PC-3 (cell line): ENCODE measurements at regions of chr5 and their contacts with region 1.

Region 1: GRCh38 chr5:57779383-57780223 is 297.0 kb upstream of the ACTBL2 start:
- DNase-seq: peak; percentile 83
- ATAC-seq: peak; percentile 44
- H3K4me3 ChIP-seq: no peak overlapping the region
- H3K27ac ChIP-seq: peak overlapping the region; percentile 40
- H3K4me1 ChIP-seq: peaks cover 47% of the 10 kb centered on the region
- H3K27me3 ChIP-seq: no peaks in the 10 kb centered on the region
- CTCF ChIP-seq: peak; percentile 71

Region 2: GRCh38 chr5:57499262-57500050 is 280.1 kb before region 1 on chr5:
- CTCF ChIA-PET with region 1: interaction called, 3 read pairs
- POLR2A ChIA-PET with region 1: no interaction called
- intact Hi-C with region 1: loop called (anchors 1 kb)
- DNase-seq: peak; percentile 71
- ATAC-seq: peak; percentile 41; the same call in 1 of the 2 replicates
- H3K4me3 ChIP-seq: peak overlapping the region; percentile 19; the same call in 1 of the 2 replicates
- H3K27ac ChIP-seq: no peak overlapping the region
- H3K4me1 ChIP-seq: peaks cover 35% of the 10 kb centered on the region
- H3K27me3 ChIP-seq: no peaks in the 10 kb centered on the region
- CTCF ChIP-seq: peak; percentile 77

Region 3: DNA sequence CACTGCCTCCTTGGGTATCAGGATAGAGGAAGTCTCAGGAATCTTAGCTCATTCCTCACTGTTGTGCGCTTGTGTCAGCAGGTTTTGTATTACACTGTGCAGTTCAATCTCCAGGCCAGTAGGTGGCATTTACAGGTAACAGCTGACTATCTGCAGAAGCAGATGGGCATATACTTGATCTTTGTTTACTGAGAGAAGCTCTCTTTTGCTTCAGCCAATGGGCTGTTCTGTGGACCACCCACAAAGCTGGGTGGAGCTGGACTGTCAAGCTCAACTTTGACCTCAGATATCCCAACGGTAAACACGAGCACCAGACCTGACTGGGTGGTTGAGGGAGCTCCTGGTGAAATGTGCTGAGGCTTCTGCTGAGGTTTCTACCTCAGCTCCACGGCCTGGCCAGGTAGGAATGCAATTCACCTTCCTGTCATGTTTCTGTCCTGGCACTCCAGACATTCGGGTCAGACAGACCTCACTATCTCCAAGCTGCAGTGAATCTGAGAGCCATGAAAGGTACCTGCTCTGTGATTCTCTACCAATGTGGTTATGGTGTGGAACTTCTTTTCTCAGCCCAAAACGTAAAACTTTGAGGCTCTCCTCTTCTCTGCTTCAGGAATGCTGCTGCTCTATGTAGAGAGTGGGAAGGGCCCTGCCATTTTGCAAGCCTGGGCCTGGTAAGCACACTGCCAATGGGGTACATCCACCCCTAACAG is 129.1 kb before region 1 on chr5:
- CTCF ChIA-PET with region 1: interaction called, 14 read pairs
- POLR2A ChIA-PET with region 1: no interaction called
- intact Hi-C with region 1: loop called (anchors 1 kb)
- DNase-seq: peak; percentile 64
- ATAC-seq: peak; percentile 86
- H3K4me3 ChIP-seq: no peak overlapping the region
- H3K27ac ChIP-seq: no peak overlapping the region
- H3K4me1 ChIP-seq: no peaks in the 10 kb centered on the region
- H3K27me3 ChIP-seq: no peaks in the 10 kb centered on the region
- CTCF ChIP-seq: peak; percentile 71

Region 4: DNA sequence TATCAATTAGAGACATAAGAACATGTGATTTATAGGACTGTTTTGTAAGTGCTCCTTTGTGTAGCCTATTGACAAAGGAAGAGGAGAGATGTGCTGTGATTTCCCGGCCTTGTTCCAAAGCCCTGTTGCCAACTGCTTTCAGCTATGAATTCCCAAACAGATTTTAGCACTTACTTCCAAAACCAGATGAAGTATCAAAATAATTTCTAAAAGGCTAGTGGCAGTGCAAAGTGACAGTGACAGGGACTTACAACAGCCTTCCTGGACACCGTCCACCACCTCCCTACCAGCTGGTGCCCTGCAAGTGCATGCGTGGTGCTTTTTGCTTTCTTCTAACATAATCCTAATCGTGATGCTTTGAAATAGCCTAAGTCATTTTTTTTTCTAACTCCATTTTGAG is 42.9 kb before region 1 on chr5:
- CTCF ChIA-PET with region 1: no interaction called
- POLR2A ChIA-PET with region 1: no interaction called
- intact Hi-C with region 1: no loop called
- DNase-seq: no peak
- ATAC-seq: no peak
- H3K4me3 ChIP-seq: no peak overlapping the region
- H3K27ac ChIP-seq: peak overlapping the region; percentile 92
- H3K4me1 ChIP-seq: peaks cover 63% of the 10 kb centered on the region
- H3K27me3 ChIP-seq: no peaks in the 10 kb centered on the region
- CTCF ChIP-seq: no peak

Region 5: DNA sequence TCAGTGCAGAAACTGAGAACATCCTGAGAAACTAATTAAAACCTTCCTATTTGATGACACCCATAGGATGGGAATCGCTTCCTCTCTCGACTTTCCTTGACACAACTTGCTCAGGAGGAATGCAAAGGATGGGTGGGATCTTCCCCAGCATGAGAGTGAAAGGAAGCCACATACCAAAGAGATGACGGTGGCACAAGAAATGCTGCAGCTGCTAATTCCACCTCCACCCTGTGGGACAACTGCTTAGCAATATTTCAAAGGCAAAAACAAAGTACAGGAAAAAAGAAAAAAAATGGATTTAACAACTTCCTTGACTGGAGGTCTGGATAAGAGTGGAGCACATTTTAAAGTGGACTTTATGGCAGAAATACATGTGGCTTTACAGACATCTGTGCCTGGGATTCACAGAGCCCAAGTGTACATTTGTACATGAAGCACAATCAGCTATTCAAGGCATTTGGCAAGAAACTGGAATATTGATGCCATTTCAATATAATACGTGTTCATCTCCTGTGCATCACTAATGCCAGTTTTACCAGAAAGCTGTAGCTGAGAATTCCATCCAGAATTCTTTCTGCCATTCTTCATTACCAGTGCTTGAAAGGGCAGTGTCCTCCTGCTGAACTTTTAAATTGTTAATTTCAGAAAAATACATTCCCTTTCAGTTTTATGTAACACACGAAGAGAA is 62.2 kb after region 1 on chr5:
- CTCF ChIA-PET with region 1: interaction called, 5 read pairs
- POLR2A ChIA-PET with region 1: interaction called, 3 read pairs
- intact Hi-C with region 1: loop called (anchors 2 kb)
- DNase-seq: peak; percentile 87
- ATAC-seq: peak; percentile 64
- H3K4me3 ChIP-seq: peak overlapping the region; percentile 12; the same call in 1 of the 2 replicates
- H3K27ac ChIP-seq: peak overlapping the region; percentile 81
- H3K4me1 ChIP-seq: peaks cover 57% of the 10 kb centered on the region
- H3K27me3 ChIP-seq: no peaks in the 10 kb centered on the region
- CTCF ChIP-seq: no peak

Region 6: DNA sequence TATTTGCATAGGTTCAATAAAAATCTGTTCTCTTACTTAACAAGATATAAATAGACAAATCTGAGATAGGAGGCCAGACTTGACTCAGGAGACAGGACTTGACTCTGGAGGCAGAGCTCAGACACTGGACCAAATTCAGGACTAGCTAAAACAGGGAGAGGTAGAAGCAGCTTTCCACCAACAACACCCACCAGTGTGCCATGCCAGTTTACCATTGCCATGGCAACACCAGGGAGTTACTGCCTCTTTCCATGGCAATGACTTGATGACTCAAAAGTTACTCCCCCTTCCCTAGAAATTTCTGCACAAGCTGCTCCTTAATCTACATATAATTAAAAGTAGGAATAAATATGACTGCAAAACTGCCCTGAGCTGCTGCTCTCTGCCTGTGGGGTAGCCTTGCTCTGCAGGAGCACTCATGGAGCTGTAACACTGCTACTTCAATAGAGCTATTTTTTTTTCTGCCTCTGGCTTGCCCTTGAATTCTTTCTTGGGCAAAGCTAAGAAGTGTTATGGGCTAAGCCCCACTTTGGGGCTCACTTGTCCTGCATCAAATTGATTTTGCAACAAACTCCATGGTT is 207.2 kb after region 1 on chr5:
- CTCF ChIA-PET with region 1: no interaction called
- POLR2A ChIA-PET with region 1: no interaction called
- intact Hi-C with region 1: loop called (anchors 10 kb)
- DNase-seq: peak; percentile 39
- ATAC-seq: peak; percentile 61
- H3K4me3 ChIP-seq: no peak overlapping the region
- H3K27ac ChIP-seq: no peak overlapping the region
- H3K4me1 ChIP-seq: peaks cover 22% of the 10 kb centered on the region
- H3K27me3 ChIP-seq: no peaks in the 10 kb centered on the region
- CTCF ChIP-seq: no peak

Region 7: GRCh38 chr5:58188262-58188651 is 408.7 kb after region 1 on chr5:
- CTCF ChIA-PET with region 1: interaction called, 4 read pairs
- POLR2A ChIA-PET with region 1: no interaction called
- intact Hi-C with region 1: loop called (anchors 10 kb)
- DNase-seq: peak; percentile 84
- ATAC-seq: peak; percentile 63
- H3K4me3 ChIP-seq: 0 out of 2 replicates have a peak overlapping the region, but pooled peaks have one; percentile 0
- H3K27ac ChIP-seq: peak overlapping the region; percentile 64
- H3K4me1 ChIP-seq: peaks cover 84% of the 10 kb centered on the region
- H3K27me3 ChIP-seq: no peaks in the 10 kb centered on the region
- CTCF ChIP-seq: peak; percentile 26; the same call in 1 of the 2 replicates